ENCODE measurements at regions of chr18 and their contacts with region 1.

Region 1: DNA sequence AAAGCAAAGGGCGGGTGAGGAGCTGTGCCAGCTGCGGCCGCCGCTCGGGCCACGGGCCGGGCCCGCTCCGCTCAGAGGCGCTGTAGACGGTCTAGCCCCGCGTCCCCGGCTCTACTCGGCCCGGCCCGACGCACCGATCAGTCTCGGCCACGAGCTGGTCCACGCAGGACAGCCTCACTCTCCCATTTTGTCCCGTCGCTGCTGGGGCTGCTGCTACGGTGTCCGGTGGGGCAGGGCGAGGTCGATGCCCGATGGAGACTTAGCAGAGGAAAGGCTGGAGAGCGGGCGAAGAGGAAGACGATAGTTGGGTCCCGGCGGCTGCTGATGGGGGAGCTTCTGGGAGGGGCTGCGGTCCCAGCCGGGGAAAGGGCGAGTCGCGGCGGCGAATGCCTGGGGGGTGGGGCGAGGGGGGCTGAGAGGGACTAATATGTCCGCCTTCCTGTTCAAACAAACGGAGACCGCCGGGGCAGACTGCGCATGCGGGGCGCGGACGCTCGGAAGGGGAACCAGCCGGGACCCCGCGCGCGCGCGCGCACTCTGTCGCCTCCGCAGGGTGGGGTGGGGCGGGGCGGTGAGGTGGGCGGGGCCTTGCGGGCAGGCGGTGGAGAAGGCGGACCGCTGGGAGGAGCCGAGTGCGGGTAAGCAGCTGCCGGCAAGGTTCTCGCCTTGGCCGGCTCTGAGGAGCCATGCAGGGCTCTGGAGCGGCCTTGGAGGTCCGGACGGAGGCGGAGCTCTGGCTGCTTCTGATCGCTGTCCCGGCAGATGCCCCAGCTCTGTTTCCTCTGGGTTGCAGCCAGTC is at the start of gene ROCK1:
- DNase-seq: peak; percentile 94
- H3K4me3 Mint-ChIP-seq: no peak within 1 kb of the TSS
- H3K27ac Mint-ChIP-seq: peak within 1 kb of the TSS; percentile 92
- H3K4me1 Mint-ChIP-seq: peaks cover 8% of the 10 kb centered on the region
- H3K27me3 Mint-ChIP-seq: no peaks in the 10 kb centered on the region
- CTCF ChIP-seq: no peak
- total RNA-seq, gene ROCK1: 44.6 and 47.9 TPM in 2 replicates

Region 2: DNA sequence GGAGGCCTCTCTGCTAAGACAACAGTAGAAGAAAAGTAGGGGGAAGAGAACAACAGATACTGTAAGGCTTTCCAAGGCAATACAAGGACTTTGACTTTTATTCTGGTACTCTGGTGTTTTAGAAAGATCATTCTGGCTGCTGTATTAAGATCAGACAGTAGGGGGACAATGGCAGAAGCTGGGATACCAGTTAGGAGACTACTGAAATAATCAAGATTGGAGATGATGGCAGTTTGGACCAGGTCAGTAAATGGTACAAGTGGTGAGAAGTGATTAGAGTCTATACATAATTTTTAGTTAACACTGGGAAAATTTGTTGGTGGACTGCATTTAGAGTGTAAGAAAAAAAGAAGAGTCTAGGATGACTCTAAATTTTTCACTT is 139.7 kb before region 1 on chr18:
- CTCF ChIA-PET with region 1: no interaction called
- POLR2A ChIA-PET with region 1: interaction called, 3 read pairs
- intact Hi-C with region 1: loop called (anchors 1 kb)
- DNase-seq: peak; percentile 47
- H3K4me3 Mint-ChIP-seq: no peak overlapping the region
- H3K27ac Mint-ChIP-seq: no peak overlapping the region
- H3K4me1 Mint-ChIP-seq: no peaks in the 10 kb centered on the region
- H3K27me3 Mint-ChIP-seq: no peaks in the 10 kb centered on the region
- CTCF ChIP-seq: peak; percentile 31

Region 3: GRCh38 chr18:21004726-21005125 is 106.8 kb before region 1 on chr18:
- CTCF ChIA-PET with region 1: no interaction called
- POLR2A ChIA-PET with region 1: no interaction called
- intact Hi-C with region 1: loop called (anchors 10 kb)
- DNase-seq: peak; percentile 66
- H3K4me3 Mint-ChIP-seq: no peak overlapping the region
- H3K27ac Mint-ChIP-seq: no peak overlapping the region
- H3K4me1 Mint-ChIP-seq: peaks cover 13% of the 10 kb centered on the region
- H3K27me3 Mint-ChIP-seq: no peaks in the 10 kb centered on the region
- CTCF ChIP-seq: no peak

Region 4: GRCh38 chr18:21053127-21053526 is 58.4 kb before region 1 on chr18:
- CTCF ChIA-PET with region 1: interaction called, 4 read pairs
- POLR2A ChIA-PET with region 1: interaction called, 22 read pairs
- intact Hi-C with region 1: loop called (anchors 1 kb)
- DNase-seq: peak; percentile 62
- H3K4me3 Mint-ChIP-seq: no peak overlapping the region
- H3K27ac Mint-ChIP-seq: peak overlapping the region; percentile 39
- H3K4me1 Mint-ChIP-seq: peaks cover 23% of the 10 kb centered on the region
- H3K27me3 Mint-ChIP-seq: no peaks in the 10 kb centered on the region
- CTCF ChIP-seq: no peak

Region 5: GRCh38 chr18:21074336-21075323 is 36.9 kb before region 1 on chr18:
- CTCF ChIA-PET with region 1: no interaction called
- POLR2A ChIA-PET with region 1: interaction called, 5 read pairs
- intact Hi-C with region 1: loop called (anchors 5 kb)
- DNase-seq: peak; percentile 40
- H3K4me3 Mint-ChIP-seq: no peak overlapping the region
- H3K27ac Mint-ChIP-seq: no peak overlapping the region
- H3K4me1 Mint-ChIP-seq: peaks cover 21% of the 10 kb centered on the region
- H3K27me3 Mint-ChIP-seq: no peaks in the 10 kb centered on the region
- CTCF ChIP-seq: no peak

Region 6: DNA sequence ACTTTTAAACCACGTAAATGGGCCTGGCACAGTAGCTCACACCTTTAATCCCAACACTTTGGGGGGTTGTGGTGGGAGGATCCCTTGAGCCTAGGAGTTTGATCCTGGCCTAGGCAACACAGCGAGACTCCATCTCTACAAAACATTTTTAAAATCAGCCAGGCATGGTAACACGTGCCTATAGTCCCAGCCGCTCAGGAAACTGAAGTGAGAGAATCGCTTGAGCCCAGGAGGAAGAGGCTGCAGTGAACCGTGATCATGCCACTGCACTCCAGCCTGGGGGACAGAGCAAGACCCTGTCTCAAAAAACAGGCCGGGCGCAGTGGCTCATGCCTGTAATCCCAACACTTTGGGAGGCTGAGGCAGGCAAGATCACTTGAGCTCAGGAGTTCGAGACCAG is 12.1 kb before region 1 on chr18:
- CTCF ChIA-PET with region 1: no interaction called
- POLR2A ChIA-PET with region 1: interaction called, 19 read pairs
- intact Hi-C with region 1: no loop called
- DNase-seq: no peak
- H3K4me3 Mint-ChIP-seq: no peak overlapping the region
- H3K27ac Mint-ChIP-seq: no peak overlapping the region
- H3K4me1 Mint-ChIP-seq: peaks cover 26% of the 10 kb centered on the region
- H3K27me3 Mint-ChIP-seq: no peaks in the 10 kb centered on the region
- CTCF ChIP-seq: no peak

Region 7: GRCh38 chr18:21163647-21164547 is 52.4 kb after region 1 on chr18:
- CTCF ChIA-PET with region 1: interaction called, 3 read pairs
- POLR2A ChIA-PET with region 1: interaction called, 23 read pairs
- intact Hi-C with region 1: loop called (anchors 2 kb)
- DNase-seq: peak; percentile 85
- H3K4me3 Mint-ChIP-seq: peak overlapping the region; percentile 28
- H3K27ac Mint-ChIP-seq: peak overlapping the region; percentile 59
- H3K4me1 Mint-ChIP-seq: peaks cover 15% of the 10 kb centered on the region
- H3K27me3 Mint-ChIP-seq: no peaks in the 10 kb centered on the region
- CTCF ChIP-seq: no peak

Region 8: DNA sequence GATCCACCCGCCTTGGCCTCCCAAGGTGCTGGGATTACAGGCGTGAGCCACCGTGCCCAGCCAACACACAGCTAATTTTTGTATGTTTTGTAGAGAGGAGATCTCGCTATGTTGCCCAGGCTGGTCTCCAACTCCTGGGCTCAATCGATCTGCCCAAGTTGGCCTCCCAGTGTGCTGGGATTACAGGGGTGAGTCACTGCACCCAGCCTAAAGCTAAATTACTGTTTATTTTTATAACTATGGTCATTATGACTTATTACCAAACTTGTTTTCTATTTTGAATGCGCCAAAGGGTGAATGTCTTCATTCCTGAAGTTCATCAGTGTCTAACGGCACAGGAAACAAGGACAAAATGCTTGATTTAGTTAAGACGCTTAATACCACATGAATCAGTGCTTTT is 91.6 kb after region 1 on chr18:
- CTCF ChIA-PET with region 1: no interaction called
- POLR2A ChIA-PET with region 1: no interaction called
- intact Hi-C with region 1: no loop called
- DNase-seq: peak; percentile 35
- H3K4me3 Mint-ChIP-seq: no peak overlapping the region
- H3K27ac Mint-ChIP-seq: no peak overlapping the region
- H3K4me1 Mint-ChIP-seq: no peaks in the 10 kb centered on the region
- H3K27me3 Mint-ChIP-seq: no peaks in the 10 kb centered on the region
- CTCF ChIP-seq: no peak